Prostate gland (tissue), 2 donors: ENCODE measurements at regions of chr16 and their contacts with region 1.

Region 1: DNA sequence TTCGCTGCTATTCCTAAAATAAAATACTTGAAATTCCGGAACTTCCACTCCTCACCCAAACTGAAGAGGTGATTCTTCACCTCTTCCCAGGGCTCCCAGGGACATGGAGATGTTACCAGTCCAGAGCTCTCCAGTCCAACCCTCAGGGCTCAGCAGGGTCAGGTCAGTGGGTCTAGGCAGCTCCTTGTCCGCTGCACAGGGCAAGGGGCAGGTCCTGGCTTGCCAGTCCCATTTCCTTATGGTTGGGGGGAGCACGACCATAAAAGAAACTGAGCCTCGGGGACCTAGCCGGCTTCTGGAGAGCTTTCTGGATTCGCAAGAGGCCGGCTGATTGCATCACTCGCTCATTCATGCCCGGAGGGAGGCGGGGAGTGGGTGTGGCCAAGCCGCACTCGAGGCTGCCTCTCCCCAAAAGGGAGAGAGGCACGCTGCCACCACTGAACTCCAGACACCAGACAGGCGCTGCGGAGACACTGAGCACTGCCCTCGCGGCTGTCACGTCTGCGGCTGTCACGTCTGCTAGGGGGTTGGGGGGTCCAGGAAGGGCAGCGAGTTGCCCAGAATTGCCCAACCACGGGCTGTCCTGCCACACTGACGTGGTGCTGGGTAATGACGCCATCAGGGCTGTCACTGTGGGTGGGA is 15.8 kb downstream of the SLC7A5 start:
- DNase-seq: peak; percentile 96
- H3K4me3 ChIP-seq: peak overlapping the region; percentile 0 to 17
- H3K27ac ChIP-seq: peak overlapping the region; percentile 76 to 79
- H3K4me1 ChIP-seq: peaks cover 14% of the 10 kb centered on the region
- H3K27me3 ChIP-seq: no peaks in the 10 kb centered on the region
- CTCF ChIP-seq: peak in 2 of 4 experiments; percentile 6 to 17
- POLR2A ChIP-seq: peak; percentile 84

Region 2: GRCh38 chr16:87790278-87791032 is 63.1 kb before region 1 on chr16:
- intact Hi-C with region 1: loop called (anchors 5 kb)
- DNase-seq: no peak
- H3K4me3 ChIP-seq: no peak overlapping the region
- H3K27ac ChIP-seq: no peak overlapping the region
- H3K4me1 ChIP-seq: no peaks in the 10 kb centered on the region
- H3K27me3 ChIP-seq: no peaks in the 10 kb centered on the region
- CTCF ChIP-seq: no peak
- POLR2A ChIP-seq: no peak

Region 3: GRCh38 chr16:87924422-87925298 is 71.1 kb after region 1 on chr16:
- intact Hi-C with region 1: no loop called
- DNase-seq: no peak
- H3K4me3 ChIP-seq: no peak overlapping the region
- H3K27ac ChIP-seq: no peak overlapping the region
- H3K4me1 ChIP-seq: no peaks in the 10 kb centered on the region
- H3K27me3 ChIP-seq: no peaks in the 10 kb centered on the region
- CTCF ChIP-seq: no peak
- POLR2A ChIP-seq: no peak

Region 4: DNA sequence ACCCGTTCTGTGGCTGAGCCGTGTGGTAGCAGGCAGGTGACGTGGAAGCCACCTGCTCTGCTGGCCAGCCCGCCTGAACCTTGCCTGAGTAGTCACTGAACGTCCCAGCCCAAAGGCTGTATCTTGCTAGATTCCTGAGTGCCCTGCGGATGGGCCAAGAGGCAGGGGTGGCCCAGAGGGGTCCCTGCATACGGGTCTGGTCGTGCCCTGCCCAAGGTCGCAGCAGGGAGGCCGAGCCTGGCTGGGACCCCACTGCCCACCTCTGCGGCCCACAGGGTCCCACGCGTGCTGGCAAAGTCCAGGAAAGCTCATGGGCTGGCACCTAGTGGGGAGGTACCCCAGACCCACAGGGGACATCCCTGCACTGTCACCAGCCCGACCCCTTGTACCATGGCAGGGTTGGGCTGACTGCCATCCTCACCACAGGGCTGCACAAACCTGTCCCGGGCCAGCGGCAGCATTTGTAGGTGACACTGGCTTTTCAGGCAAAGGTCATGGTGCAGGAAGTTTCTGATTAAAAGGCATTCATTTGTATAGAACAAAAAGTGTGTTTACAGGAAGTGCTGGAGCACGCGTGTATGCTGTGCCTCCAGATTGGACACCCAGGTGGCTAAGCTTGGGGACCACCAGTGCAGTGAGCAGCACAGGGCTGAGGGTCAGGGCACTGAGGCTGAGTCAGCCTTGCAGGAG is 671.6 kb after region 1 on chr16:
- intact Hi-C with region 1: no loop called
- DNase-seq: no peak
- H3K4me3 ChIP-seq: no peak overlapping the region
- H3K27ac ChIP-seq: no peak overlapping the region
- H3K4me1 ChIP-seq: no peaks in the 10 kb centered on the region
- H3K27me3 ChIP-seq: no peaks in the 10 kb centered on the region
- CTCF ChIP-seq: no peak
- POLR2A ChIP-seq: no peak